Calu3 (cell line): ENCODE measurements at regions of chr3 and their contacts with region 1.

Region 1: DNA sequence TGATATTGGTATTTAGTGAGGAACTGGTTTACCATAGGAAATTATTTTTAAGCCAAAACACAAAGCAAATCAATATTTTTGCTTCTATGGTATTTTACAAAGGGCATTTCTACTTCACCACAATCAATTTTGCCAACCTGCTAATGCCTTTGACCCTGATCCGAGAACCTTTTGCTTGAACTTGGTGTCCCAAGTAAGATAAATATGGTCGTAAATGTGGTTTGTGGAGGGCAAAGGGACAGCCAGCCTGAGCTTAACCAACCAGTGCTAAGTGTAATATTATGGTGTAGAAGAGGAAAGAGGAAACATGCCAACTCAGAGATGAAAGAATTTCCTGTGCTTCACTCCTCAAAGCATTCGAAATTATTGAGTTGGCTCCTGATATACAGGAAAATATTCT is 148.4 kb downstream of the C3orf38 start:
- DNase-seq: peak; percentile 48
- H3K4me3 Mint-ChIP-seq: peak overlapping the region; percentile 13
- H3K27ac Mint-ChIP-seq: peak overlapping the region; percentile 59
- H3K4me1 Mint-ChIP-seq: peaks cover 15% of the 10 kb centered on the region
- H3K27me3 Mint-ChIP-seq: no peaks in the 10 kb centered on the region
- CTCF ChIP-seq: no peak

Region 2: DNA sequence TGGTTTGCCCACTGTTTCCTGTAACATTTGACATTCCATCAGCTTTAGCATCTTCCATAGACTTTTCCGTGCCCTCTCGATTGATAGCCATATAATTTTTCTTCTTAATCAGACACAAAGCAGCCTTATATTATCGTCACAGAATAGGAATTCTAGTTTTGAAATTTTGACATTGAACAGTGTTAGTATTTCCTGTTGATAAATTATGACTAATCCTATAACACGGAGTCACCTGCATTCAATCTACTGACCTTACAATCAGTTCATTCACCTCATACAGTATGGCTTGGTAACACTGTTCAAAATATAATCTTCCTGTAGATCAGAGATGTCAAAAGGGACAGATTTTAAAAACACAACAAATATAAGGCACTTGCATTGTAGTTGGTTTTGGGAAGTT is 275.3 kb after region 1 on chr3:
- CTCF ChIA-PET with region 1: no interaction called
- intact Hi-C with region 1: loop called (anchors 5 kb)
- DNase-seq: no peak
- H3K4me3 Mint-ChIP-seq: peak overlapping the region; percentile 2
- H3K27ac Mint-ChIP-seq: peak overlapping the region; percentile 32
- H3K4me1 Mint-ChIP-seq: peaks cover 10% of the 10 kb centered on the region
- H3K27me3 Mint-ChIP-seq: no peaks in the 10 kb centered on the region
- CTCF ChIP-seq: no peak